Left cardiac atrium (tissue), 4 donors: ENCODE measurements at regions of chr14 and their contacts with region 1.

Region 1: DNA sequence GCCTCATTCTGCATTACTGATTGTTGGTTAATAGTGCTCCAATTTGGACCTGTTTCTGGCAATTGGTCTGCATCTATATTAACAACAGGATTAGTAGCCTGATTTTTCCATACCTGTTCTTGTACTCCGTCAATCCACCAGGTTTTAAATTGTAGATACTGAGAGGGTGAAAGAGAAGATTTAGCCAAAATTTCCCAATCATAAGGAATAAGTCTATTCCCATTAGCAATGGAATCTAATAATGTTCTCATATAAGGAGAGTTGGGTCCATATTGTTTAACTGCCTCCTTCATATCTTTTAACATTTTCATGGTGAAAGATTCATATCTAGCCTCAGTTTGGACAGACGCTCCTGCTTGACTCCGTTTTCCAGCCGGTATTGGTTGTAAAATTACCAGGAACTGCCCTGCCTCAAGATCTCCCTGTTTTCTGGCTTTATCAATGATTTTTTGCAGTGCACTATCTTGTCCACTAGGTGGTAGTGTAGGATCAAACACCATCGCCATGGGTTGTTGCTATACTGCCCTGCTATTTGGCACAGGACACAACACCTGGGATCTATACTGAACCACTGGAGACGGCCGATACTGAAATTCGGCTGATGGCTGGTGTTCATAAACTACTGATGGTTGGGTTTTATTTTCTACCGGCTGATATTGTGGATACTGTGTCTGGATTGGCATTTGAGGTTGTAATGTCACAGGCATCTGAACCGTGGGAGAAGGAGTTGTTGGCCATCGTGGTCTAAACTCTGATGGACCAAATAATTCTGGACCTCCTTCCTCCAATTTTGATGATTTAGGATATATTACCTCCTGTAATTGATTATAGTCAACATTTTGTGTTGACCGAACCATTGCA is 25.2 kb downstream of the DHRS4L2 start:
- DNase-seq: no peak
- ATAC-seq: peak; percentile 85 to 86

Region 2: DNA sequence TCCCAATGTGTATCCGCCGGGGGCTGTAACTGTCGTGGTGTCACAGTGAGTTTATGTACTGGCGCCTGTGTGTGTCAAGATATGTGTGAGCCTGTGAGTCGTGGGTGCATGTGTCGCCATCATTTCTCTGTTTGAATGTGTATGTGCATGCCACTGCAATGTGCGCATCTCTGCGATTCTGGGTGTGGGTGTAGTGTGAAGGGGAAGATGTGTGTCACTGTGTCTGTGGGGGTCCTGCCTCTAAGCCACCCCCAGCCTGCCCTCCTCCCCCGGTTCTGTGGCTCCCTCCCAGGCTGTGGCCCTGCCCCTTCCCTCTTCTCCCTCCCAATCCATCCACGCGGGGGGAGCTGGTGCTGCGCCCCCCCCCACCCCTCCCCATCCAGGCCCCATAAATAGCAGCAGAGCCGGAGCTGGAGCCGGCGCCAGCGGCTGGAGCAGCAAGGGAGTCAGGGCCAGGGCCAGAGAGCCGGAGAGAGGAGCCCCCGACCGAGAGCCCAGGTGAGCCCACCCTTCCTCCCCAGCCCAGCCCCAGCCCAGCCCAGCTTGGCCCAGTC is 57.3 kb after region 1 on chr14 and contains the start of gene CPNE6:
- intact Hi-C with region 1: no loop called
- DNase-seq: no peak
- ATAC-seq: no peak
- total RNA-seq, gene CPNE6: not detected

Region 3: DNA sequence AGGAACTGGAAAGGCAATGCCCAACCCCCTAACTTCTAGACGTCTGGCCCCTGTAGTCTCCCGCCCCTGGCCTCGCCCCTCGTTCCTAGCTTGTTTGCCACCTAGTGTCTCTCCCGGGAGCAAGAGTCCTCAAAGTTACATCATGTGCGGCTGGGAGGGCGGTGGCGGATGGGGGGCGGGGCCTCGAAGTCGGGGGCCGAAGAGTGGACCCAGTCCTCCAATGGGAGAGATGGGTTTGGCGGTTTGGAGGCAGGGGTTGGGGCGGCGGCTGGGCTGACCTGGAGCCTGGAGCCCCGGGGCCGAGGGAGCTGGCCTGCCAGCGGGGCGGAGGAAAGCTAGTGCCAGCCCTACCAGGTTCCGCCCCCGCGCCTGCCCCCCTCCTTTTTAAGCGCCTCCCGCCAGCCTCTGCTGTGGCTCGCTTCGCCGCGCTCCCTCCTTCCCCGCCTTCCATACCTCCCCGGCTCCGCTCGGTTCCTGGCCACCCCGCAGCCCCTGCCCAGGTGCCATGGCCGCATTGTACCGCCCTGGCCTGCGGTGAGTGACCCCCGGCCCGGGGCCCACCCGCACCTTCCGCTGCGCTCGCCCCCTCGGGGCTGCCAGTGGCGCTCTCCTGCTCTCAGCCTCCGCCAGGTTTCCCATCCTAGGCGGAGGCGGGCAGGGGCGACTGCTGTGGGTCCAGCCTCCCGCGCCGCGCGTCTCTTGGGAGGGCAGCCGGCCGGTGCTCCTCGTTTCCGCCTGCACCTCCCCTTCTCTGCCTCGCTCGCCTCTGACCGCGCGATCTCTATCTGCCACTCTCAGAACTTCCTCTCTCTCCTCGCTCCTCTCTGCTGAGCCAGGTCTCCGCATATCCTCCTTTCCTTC is 80.2 kb after region 1 on chr14 and contains the start of gene PCK2:
- intact Hi-C with region 1: loop called in 1 of 2 experiments (anchors 2 kb)
- DNase-seq: peak; percentile 94
- ATAC-seq: peak; percentile 88 to 95
- total RNA-seq, gene PCK2: 11.5 to 13.0 TPM